Sigmoid colon (tissue), 7 donors: ENCODE measurements at regions of chr14 and their contacts with region 1.

Region 1: GRCh38 chr14:30558675-30559555 is at the start of gene G2E3:
- DNase-seq: peak; percentile 90
- H3K4me3 ChIP-seq: peak within 1 kb of the TSS; percentile 80 to 88 (median 86)
- H3K27ac ChIP-seq: peak within 1 kb of the TSS; percentile 84 to 88 (median 86)
- H3K4me1 ChIP-seq: peaks cover 0 to 16% (median 13%) of the 10 kb centered on the region in 4 donors
- H3K27me3 ChIP-seq: no peaks in the 10 kb centered on the region
- CTCF ChIP-seq: no peak
- EP300 ChIP-seq: no peak
- POLR2A ChIP-seq: peak; percentile 68 to 70
- total RNA-seq, gene G2E3: 6.7 to 13.0 (median 10.1) TPM

Region 2: GRCh38 chr14:30621940-30622830 is 63.3 kb after region 1 on chr14 and contains the start of gene SCFD1:
- intact Hi-C with region 1: loop called (anchors 5 kb)
- DNase-seq: peak; percentile 96
- H3K4me3 ChIP-seq: peak within 1 kb of the TSS; percentile 63 to 87 (median 74)
- H3K27ac ChIP-seq: peak within 1 kb of the TSS; percentile 86 to 87 (median 86)
- H3K4me1 ChIP-seq: peaks cover 0 to 37% (median 22%) of the 10 kb centered on the region in 4 donors
- H3K27me3 ChIP-seq: no peaks in the 10 kb centered on the region
- CTCF ChIP-seq: no peak
- EP300 ChIP-seq: peak in 1 of 4 donors; percentile 28
- POLR2A ChIP-seq: peak; percentile 96 to 97
- total RNA-seq, gene SCFD1: 36.1 to 86.1 (median 57.3) TPM